Mammary epithelial cell (primary cell): ENCODE measurements at regions of chr11 and their contacts with region 1.

Region 1: DNA sequence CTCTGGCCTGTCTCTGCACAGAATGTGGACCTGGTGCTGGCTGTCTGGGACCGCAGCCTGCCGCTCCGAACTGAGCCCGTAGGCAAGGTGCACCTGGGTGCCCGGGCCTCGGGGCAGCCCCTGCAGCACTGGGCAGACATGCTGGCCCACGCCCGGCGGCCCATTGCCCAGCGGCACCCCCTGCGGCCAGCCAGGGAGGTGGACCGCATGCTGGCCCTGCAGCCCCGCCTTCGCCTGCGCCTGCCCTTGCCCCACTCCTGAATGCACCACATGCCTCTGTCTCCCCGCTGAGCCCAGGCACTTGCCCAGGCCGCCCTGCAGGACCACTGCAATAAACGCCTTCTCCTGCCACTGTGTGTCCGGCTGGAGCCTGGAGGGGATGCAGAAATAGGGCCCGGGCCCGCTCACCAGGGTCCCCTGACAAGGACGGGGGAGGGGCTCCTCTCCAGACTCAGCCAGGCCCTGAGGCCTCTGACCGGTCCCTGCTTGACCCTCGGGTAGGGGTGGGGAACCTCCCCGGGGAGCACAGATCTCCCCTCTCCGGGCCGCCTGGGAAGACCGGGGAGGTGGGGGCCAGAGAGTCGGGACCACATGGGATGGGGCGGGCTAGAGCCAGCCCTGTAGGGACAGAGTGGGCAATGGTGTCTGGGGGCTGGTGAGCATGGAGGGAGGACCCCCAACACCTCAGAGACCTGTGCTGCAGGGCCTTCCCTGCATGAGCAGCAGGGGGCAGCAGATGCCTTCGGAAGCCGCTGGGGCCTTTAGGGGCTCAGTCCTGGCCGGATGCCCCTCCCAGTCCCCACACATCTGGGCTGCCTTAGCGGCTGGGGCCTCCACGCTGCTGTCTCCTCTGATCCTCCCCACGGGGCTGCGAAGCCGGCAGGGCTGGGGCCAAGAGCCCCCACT is 1.4 kb upstream of the TNNI2 start:
- DNase-seq: no peak
- H3K4me3 ChIP-seq: peak overlapping the region; percentile 13 to 69 (median 64)
- H3K27ac ChIP-seq: no peak overlapping the region
- H3K4me1 ChIP-seq: peaks cover 62% of the 10 kb centered on the region
- H3K27me3 ChIP-seq: no peaks in the 10 kb centered on the region
- CTCF ChIP-seq: peak; percentile 69 to 88

Region 2: GRCh38 chr11:1532014-1532586 is 305.3 kb before region 1 on chr11:
- CTCF ChIA-PET with region 1: no interaction called
- dilution Hi-C with region 1: no loop called
- in situ Hi-C with region 1: no loop called
- intact Hi-C with region 1: loop called (anchors 10 kb)
- DNase-seq: peak; percentile 79
- H3K4me3 ChIP-seq: no peak overlapping the region
- H3K27ac ChIP-seq: peak overlapping the region; percentile 68
- H3K4me1 ChIP-seq: peaks cover 57% of the 10 kb centered on the region
- H3K27me3 ChIP-seq: no peaks in the 10 kb centered on the region
- CTCF ChIP-seq: peak in 1 of 2 donors; percentile 32

Region 3: DNA sequence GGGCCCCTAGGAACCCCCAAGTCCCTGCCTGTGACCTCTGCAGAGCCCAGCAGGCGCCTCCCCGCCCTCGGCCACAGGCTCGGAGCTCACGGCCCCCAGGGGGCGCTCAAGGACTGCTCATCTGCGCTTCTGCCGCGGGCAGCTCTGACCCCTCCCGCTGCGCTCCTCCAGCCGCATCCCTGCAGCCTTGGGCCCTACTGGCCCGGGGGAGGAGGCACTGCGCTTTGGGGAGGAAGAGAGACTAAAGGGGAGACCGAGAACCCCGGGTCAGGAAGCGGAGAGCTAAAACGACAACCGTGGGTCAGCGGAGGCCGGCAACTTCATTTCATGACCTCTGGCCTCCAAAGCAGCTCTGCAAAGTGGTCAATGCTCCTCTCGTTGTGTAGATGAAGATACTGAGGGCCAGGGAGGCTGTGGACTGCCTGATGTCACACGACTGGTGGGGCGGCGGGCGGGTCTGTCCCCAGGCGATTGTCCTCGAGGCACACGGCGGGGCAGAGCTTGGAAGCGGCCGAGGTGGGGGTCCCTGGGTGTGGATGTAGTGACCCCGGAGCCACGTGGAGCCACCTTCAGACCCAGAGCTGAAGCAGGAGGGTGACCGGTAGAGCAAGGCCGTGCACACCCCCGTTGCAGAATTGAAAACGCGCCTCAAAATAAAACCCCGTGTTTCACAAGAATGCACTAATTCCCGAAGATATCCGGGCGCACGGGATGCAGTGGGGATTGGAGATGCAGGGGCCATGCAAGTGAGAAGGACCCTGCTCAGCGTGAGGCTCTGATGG is 143.2 kb before region 1 on chr11:
- CTCF ChIA-PET with region 1: interaction called, 38 read pairs
- dilution Hi-C with region 1: no loop called
- in situ Hi-C with region 1: loop called in 1 of 2 experiments (anchors 5 kb)
- intact Hi-C with region 1: loop called (anchors 1 kb)
- DNase-seq: peak; percentile 58
- H3K4me3 ChIP-seq: peak overlapping the region in 2 of 3 experiments; percentile 49 to 54
- H3K27ac ChIP-seq: no peak overlapping the region
- H3K4me1 ChIP-seq: peaks cover 14% of the 10 kb centered on the region
- H3K27me3 ChIP-seq: peaks cover 8% of the 10 kb centered on the region
- CTCF ChIP-seq: peak; percentile 72 to 92

Region 4: DNA sequence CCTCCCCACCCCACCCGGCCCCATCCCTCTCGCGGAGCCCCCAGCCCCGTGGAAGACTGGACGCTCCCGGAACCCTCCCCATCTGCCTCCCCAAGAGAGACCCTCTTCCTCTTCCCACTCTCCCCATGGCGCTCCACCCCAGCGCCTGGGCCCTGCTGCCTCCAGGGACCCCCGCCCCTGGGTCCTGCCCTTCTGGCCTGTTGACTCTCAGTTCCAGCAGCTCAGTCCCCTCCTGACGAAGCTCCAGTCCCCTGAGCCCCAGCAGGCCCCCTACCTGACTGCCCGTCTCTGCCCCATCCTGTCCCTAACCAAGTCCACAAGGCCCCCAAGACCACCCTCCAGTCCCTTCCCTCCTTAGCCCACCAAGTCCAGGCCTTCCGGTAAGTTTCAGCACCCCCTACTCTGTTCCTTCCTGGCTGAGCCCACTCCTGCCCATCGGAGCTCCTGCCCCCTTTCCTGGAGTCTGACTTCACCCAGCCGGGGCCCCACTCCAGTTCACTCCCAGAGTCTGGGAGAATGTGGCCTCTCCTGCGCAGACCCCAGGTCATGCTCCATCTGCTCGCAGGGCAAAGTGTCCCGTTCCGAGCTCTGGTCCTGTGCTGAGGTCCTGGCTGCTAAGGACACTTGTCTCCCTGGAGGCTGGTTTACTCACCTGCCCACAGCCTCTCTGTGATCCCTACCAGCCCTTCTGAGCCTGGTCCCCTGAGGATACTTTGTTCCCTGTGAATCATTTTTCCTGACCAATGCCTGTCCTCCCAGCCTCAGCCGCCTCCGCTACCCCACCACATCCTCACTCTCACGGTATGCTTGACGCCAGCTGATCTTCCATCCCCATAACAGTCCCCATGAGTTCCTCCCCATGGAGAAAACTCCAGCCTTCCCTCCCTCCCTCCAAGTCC is 87.8 kb before region 1 on chr11:
- CTCF ChIA-PET with region 1: interaction called, 3 read pairs
- dilution Hi-C with region 1: no loop called
- in situ Hi-C with region 1: loop called in 1 of 2 experiments (anchors 10 kb)
- intact Hi-C with region 1: no loop called
- DNase-seq: peak; percentile 92
- H3K4me3 ChIP-seq: peak overlapping the region; percentile 52 to 74 (median 67)
- H3K27ac ChIP-seq: peak overlapping the region; percentile 54
- H3K4me1 ChIP-seq: peaks cover 59% of the 10 kb centered on the region
- H3K27me3 ChIP-seq: no peaks in the 10 kb centered on the region
- CTCF ChIP-seq: no peak

Region 5: GRCh38 chr11:1876361-1877063 is 39.1 kb after region 1 on chr11:
- CTCF ChIA-PET with region 1: interaction called, 3 read pairs
- dilution Hi-C with region 1: no loop called
- in situ Hi-C with region 1: no loop called
- intact Hi-C with region 1: loop called (anchors 5 kb)
- DNase-seq: no peak
- H3K4me3 ChIP-seq: no peak overlapping the region
- H3K27ac ChIP-seq: no peak overlapping the region
- H3K4me1 ChIP-seq: peaks cover 19% of the 10 kb centered on the region
- H3K27me3 ChIP-seq: no peaks in the 10 kb centered on the region
- CTCF ChIP-seq: peak; percentile 12 to 47

Region 6: GRCh38 chr11:1917671-1918516 is 80.5 kb after region 1 on chr11:
- CTCF ChIA-PET with region 1: no interaction called
- dilution Hi-C with region 1: no loop called
- in situ Hi-C with region 1: no loop called
- intact Hi-C with region 1: loop called (anchors 1 kb)
- DNase-seq: no peak
- H3K4me3 ChIP-seq: no peak overlapping the region
- H3K27ac ChIP-seq: no peak overlapping the region
- H3K4me1 ChIP-seq: no peaks in the 10 kb centered on the region
- H3K27me3 ChIP-seq: no peaks in the 10 kb centered on the region
- CTCF ChIP-seq: peak in 1 of 2 donors; percentile 22